BJ (cell line): ENCODE measurements at regions of chr2 and their contacts with region 1.

Region 1: DNA sequence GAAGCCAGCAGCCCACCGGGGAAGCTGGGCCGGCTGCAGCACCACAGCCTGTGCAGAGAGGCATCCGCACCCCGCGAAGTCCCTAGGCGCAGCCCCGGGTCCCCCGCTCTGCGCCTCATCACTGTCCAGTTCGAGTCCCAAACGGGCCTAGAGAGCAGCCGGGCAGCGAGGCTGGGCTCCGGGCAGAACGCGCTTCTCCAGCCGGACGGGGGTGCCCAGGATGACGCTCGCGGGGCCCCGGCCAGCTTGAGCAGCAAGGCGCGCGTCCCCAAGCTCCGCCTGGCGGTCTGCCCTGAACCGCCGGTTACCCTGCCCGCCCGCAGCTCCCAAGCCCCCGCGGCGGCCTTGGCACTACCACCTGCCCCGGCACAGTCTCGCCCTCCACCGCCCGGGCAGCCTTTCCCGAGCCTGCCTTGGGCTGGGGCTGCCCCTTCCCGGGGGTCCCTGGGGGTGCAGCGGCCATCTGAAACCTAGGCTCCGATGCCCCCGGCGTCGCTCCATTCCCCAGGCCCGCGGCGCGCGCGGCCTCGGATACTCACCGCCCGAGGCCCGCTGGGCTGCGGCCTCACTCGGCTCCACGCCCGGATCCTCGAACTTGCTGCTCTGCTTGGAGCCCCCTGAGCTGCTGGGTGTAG is 591 bp downstream of the SLC16A14 start:
- DNase-seq: no peak
- H3K4me3 ChIP-seq: peak overlapping the region; percentile 51
- H3K27me3 ChIP-seq: peaks cover 2% of the 10 kb centered on the region
- CTCF ChIP-seq: no peak

Region 2: GRCh38 chr2:230007931-230008707 is 60.0 kb before region 1 on chr2:
- CTCF ChIA-PET with region 1: interaction called, 24 read pairs
- POLR2A ChIA-PET with region 1: no interaction called
- DNase-seq: peak; percentile 17
- H3K4me3 ChIP-seq: no peak overlapping the region
- H3K27me3 ChIP-seq: no peaks in the 10 kb centered on the region
- CTCF ChIP-seq: peak; percentile 80

Region 3: DNA sequence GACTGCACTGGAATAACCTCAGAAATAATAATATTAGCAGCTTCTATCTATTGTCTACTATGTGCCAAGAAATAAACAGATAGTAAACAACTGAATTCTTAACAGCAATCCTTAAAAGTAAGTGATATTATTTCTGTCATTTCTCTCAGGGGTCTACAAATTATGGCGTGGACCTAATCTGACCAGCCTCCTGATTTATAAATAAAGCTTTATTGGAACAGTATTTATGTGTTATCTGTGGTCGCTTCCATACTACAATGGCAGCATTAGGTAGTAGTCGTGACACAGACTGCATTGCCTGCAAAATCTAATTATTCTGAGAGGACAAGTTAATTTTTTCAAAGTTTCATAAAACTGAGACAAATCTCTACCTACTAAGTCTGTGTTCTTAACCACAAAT is 48.4 kb before region 1 on chr2:
- CTCF ChIA-PET with region 1: interaction called, 11 read pairs
- POLR2A ChIA-PET with region 1: no interaction called
- DNase-seq: no peak
- H3K4me3 ChIP-seq: no peak overlapping the region
- H3K27me3 ChIP-seq: no peaks in the 10 kb centered on the region
- CTCF ChIP-seq: no peak

Region 4: DNA sequence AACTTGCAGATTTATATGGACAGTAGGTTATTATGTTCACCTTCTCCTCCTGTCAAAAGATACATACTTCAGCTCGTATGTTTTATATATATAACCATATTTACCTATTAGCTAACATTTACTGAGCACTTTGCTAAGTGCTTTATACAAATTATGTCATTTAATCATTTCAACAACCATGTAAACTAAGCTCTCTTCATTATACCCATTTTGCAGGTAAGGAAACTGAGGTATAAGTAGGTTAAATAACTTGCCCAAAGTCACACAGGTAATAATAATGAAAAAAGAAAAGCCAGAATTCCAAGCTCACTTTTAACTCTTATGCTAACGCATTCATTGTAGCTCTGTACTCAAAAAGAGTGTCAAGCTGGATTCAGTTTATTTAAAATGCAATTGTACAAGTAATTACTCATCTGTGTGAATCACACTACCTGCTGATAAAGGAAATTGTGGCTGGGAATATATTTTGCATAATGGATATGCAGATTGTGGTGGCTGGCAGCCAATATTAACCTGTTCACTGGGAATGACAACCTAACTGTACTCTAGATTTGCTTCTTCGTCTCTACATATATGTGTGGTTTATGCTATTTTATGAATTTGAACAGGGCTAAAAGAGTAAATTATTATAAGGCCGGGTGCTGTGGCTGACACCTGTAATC is 20.0 kb before region 1 on chr2:
- CTCF ChIA-PET with region 1: interaction called, 11 read pairs
- POLR2A ChIA-PET with region 1: interaction called, 3 read pairs
- DNase-seq: no peak
- H3K4me3 ChIP-seq: no peak overlapping the region
- H3K27me3 ChIP-seq: no peaks in the 10 kb centered on the region
- CTCF ChIP-seq: no peak

Region 5: DNA sequence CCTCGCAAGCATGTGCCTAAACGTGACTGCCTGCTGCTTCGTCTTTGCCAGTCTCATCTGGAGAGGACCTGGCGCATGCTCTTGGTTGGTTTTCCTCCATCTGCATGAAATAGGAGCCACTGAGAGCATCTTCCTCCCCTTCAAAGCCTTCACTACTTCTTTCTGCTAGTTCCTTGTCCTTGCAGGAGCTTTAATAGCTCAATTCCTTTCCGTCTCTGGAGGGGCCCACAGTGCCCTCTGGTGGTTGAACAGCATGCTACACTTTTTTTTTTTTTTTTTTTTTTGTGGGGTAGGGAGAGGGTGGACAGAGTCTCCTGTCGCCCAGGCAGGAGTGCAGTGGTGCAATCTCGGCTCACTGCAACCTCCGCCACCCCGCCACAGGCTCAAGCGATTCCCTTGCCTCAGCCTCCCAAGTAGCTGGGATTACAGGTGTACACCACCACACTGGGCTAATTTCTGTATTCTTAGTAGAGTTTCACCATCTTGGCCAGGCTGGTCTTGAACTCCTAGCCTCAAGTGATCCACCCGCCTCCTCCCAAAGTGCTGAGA is 92.1 kb after region 1 on chr2:
- CTCF ChIA-PET with region 1: interaction called, 42 read pairs
- POLR2A ChIA-PET with region 1: no interaction called
- DNase-seq: no peak
- H3K4me3 ChIP-seq: no peak overlapping the region
- H3K27me3 ChIP-seq: no peaks in the 10 kb centered on the region
- CTCF ChIP-seq: peak; percentile 80

Region 6: DNA sequence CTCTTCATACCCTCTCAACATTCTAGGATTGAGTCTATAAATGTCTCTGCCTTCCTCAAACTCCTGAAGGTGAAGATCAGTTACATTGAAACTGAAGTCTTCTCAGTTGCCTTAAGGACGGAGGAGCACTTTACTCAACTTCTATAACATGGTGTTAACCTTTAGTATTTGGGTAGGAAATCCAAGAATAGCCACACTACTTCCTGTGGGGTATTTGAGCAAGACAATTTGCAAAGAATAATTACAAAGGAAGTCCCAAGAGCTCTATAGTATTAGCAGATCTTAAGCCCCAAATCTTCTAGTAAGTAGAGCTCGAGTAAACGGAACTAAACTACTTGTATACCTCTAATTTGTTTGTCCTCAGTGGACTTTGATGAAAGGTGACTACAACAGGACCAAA is 428.8 kb after region 1 on chr2:
- CTCF ChIA-PET with region 1: no interaction called
- POLR2A ChIA-PET with region 1: no interaction called
- DNase-seq: no peak
- H3K4me3 ChIP-seq: no peak overlapping the region
- H3K27me3 ChIP-seq: no peaks in the 10 kb centered on the region
- CTCF ChIP-seq: no peak